AG04449 (cell line): ENCODE measurements at regions of chr5 and their contacts with region 1.

Region 1: GRCh38 chr5:122156724-122157325 is 27.5 kb downstream of the ZNF474 start:
- DNase-seq: no peak
- H3K4me3 ChIP-seq: no peak overlapping the region
- CTCF ChIP-seq: peak; percentile 35

Region 2: DNA sequence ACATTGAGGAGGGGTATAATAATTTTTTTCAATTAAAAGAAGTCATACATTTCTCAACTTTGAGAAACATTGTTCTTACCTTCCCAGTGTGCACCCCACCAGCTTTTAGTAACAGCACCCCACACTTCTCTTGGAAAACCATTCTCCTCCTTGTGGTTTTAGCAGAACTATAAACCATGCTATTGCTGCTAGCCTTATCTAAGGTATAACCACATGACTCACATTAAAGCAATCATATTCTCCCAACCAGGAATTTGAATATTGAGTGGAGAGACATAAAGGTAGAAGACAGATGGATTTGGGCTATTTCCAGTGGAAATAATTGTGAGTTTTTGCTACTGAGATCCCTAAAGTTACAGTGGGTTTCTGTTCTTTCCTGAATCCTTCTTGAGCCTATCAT is 238.6 kb before region 1 on chr5:
- CTCF ChIA-PET with region 1: no interaction called
- POLR2A ChIA-PET with region 1: no interaction called
- DNase-seq: no peak
- H3K4me3 ChIP-seq: no peak overlapping the region
- CTCF ChIP-seq: no peak

Region 3: DNA sequence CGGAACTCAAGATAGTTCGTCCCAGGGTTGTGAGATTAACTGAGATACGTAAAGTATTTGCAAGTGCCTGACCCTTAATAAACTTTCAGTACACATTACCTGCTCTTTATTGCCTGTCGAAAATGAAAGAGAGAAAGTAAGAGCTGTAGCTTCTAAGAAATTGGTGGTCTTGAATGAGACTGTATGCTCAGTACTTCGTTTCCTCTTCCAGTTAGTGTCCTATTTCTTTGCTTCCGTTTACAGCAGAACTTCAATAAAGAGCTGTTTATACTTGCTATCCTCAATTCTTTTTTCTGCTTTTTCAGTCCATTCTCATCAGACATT is 194.5 kb before region 1 on chr5:
- CTCF ChIA-PET with region 1: interaction called, 56 read pairs
- POLR2A ChIA-PET with region 1: interaction called, 3 read pairs
- DNase-seq: no peak
- H3K4me3 ChIP-seq: peak overlapping the region; percentile 99
- CTCF ChIP-seq: no peak

Region 4: GRCh38 chr5:122063836-122064235 is 93.0 kb before region 1 on chr5:
- CTCF ChIA-PET with region 1: interaction called, 12 read pairs
- POLR2A ChIA-PET with region 1: interaction called, 5 read pairs
- DNase-seq: no peak
- H3K4me3 ChIP-seq: no peak overlapping the region
- CTCF ChIP-seq: no peak

Region 5: DNA sequence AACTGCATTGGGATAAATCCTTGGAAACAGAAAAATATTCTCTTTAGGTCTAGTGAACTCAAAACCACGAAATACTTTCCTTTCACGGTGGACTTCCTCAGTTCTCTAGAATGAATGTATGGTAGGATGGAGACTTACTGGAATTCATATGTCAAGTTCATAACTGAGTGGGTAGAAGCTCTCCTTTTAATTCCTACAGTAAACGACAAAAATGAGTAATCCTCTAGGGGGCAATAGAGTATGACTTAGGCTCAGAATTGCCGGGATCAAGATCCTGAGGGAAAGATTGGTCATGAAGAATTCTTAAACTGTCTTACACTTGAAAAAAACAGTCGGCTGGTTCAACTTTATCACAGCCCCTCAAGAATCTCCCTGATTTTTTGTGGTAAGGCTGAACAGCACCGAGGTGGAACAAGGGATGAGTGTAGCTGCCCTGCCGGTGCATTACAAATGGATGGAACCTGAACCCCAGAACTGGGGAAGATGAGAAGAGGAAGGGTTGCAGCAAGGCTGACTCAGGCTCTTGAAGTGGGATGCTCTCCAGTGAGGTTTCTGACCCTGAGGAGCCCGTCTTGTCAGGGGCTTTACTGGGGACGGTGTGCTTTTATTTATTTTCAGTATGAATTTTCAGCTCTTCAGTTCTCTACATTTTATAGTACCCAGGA is 64.8 kb before region 1 on chr5:
- CTCF ChIA-PET with region 1: interaction called, 166 read pairs
- POLR2A ChIA-PET with region 1: interaction called, 12 read pairs
- DNase-seq: peak; percentile 77
- H3K4me3 ChIP-seq: peak overlapping the region; percentile 19
- CTCF ChIP-seq: peak; percentile 21

Region 6: GRCh38 chr5:122129306-122129705 is 27.5 kb before region 1 on chr5 and contains the start of gene ZNF474:
- CTCF ChIA-PET with region 1: interaction called, 27 read pairs
- POLR2A ChIA-PET with region 1: interaction called, 3 read pairs
- DNase-seq: peak; percentile 94
- H3K4me3 ChIP-seq: no peak within 1 kb of the TSS
- CTCF ChIP-seq: no peak

Region 7: DNA sequence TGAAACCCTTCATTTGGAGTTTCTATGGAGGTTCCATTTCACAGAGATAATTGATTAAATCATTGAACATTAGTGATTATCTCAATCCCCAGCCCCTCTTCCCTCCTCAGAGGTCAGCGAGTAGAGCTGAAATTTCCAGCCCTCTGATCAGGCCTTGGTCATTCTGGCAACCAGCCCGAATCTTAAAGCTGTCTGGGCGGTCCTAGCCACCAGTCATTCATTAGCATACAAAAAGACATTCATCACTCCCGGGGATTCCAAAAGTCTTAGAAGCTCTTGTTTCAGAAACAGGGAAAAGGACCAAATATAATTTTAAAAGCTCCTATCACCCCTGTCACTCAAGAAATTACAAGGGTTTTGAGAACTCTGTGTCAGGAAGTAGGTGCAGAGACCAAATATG is 13.8 kb after region 1 on chr5:
- CTCF ChIA-PET with region 1: interaction called, 21 read pairs
- POLR2A ChIA-PET with region 1: no interaction called
- DNase-seq: no peak
- H3K4me3 ChIP-seq: no peak overlapping the region
- CTCF ChIP-seq: no peak

Region 8: GRCh38 chr5:122182491-122182921 is 25.7 kb after region 1 on chr5:
- CTCF ChIA-PET with region 1: interaction called, 26 read pairs
- POLR2A ChIA-PET with region 1: no interaction called
- DNase-seq: no peak
- H3K4me3 ChIP-seq: peak overlapping the region; percentile 18; the same call in 1 of the 2 replicates
- CTCF ChIP-seq: no peak

Region 9: DNA sequence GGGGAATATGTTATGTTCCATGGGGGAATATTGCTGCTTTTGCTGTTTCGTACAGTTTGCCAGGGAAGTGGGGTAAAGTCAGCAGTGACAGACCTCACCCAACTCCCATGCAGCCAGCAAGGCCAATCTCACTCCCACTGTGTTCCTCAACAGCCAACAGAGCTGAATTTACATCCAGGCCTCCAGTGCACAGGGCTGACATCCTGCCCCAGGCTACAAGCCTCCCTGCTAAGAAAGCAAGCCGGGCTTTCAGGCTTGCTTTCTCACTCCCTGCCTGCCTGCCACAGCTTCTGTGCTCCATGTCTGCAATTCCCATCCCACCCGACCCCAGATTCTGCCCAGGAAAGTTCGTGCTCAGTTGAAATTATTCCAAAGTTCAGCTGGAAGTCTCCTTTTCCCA is 129.7 kb after region 1 on chr5:
- CTCF ChIA-PET with region 1: no interaction called
- POLR2A ChIA-PET with region 1: no interaction called
- DNase-seq: no peak
- H3K4me3 ChIP-seq: no peak overlapping the region
- CTCF ChIP-seq: no peak